Activated CD4-positive, alpha-beta T cell treated with anti-CD3 and anti-CD28 coated beads for 36 hours (primary cell): ENCODE measurements at regions of chr7 and their contacts with region 1.

Region 1: DNA sequence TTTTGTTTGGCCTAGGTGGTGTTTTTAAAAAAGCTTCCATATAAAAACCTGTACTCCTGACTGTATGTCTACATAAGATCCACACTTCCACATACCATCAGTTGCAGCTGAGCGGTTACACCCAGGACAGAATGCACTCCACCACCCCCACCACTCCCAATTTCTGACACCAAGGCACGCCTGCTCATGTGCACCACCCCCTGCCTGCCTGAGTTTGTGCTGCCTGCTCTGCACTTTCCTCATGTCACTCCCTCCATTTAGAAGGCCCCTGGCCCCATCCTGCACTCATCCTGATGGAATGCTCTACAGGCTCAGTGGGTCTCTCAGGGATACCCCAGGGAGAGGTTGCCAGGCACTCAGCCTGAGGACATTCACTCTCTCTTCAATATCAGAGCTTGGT is 6.5 kb downstream of the VPS41 start:
- DNase-seq: no peak
- ATAC-seq: no peak
- H3K4me3 Mint-ChIP-seq: no peak overlapping the region
- H3K27ac Mint-ChIP-seq: no peak overlapping the region
- H3K4me1 Mint-ChIP-seq: peaks cover 56% of the 10 kb centered on the region
- H3K27me3 Mint-ChIP-seq: no peaks in the 10 kb centered on the region

Region 2: DNA sequence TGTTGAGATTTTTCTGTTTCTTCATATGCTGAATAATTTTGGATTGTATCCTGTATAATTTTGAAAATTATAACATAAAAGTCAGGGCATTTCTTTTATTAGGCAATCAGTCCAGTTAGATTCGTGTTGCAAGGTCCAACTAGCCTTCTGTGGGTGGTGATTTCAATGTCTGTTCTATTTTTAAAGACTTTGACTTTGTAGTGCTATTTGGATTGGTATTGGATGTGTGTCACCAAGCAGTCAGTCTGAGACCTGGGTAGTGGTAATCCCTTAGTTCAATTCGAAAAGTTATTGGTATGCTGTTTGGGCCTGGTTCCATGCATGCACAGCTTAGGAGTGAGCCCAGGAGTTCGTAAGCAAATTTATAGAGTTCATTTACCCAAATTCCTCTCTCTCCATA is 899.8 kb before region 1 on chr7:
- CTCF ChIA-PET with region 1: no interaction called
- POLR2A ChIA-PET with region 1: no interaction called
- intact Hi-C with region 1: no loop called
- DNase-seq: no peak
- ATAC-seq: no peak
- H3K4me3 Mint-ChIP-seq: no peak overlapping the region
- H3K27ac Mint-ChIP-seq: no peak overlapping the region
- H3K4me1 Mint-ChIP-seq: no peaks in the 10 kb centered on the region
- H3K27me3 Mint-ChIP-seq: peaks cover 6% of the 10 kb centered on the region

Region 3: GRCh38 chr7:38186593-38187314 is 715.7 kb before region 1 on chr7:
- CTCF ChIA-PET with region 1: no interaction called
- POLR2A ChIA-PET with region 1: no interaction called
- intact Hi-C with region 1: loop called in 1 of 2 experiments (anchors 5 kb)
- DNase-seq: no peak
- ATAC-seq: no peak
- H3K4me3 Mint-ChIP-seq: no peak overlapping the region
- H3K27ac Mint-ChIP-seq: no peak overlapping the region
- H3K4me1 Mint-ChIP-seq: peaks cover 25% of the 10 kb centered on the region
- H3K27me3 Mint-ChIP-seq: no peaks in the 10 kb centered on the region

Region 4: GRCh38 chr7:38825721-38826440 is 76.6 kb before region 1 on chr7:
- CTCF ChIA-PET with region 1: no interaction called
- POLR2A ChIA-PET with region 1: no interaction called
- intact Hi-C with region 1: no loop called
- DNase-seq: no peak
- ATAC-seq: no peak
- H3K4me3 Mint-ChIP-seq: no peak overlapping the region
- H3K27ac Mint-ChIP-seq: no peak overlapping the region
- H3K4me1 Mint-ChIP-seq: peaks cover 2% of the 10 kb centered on the region
- H3K27me3 Mint-ChIP-seq: no peaks in the 10 kb centered on the region